ENCODE measurements at regions of chr4 and their contacts with region 1.

Region 1: DNA sequence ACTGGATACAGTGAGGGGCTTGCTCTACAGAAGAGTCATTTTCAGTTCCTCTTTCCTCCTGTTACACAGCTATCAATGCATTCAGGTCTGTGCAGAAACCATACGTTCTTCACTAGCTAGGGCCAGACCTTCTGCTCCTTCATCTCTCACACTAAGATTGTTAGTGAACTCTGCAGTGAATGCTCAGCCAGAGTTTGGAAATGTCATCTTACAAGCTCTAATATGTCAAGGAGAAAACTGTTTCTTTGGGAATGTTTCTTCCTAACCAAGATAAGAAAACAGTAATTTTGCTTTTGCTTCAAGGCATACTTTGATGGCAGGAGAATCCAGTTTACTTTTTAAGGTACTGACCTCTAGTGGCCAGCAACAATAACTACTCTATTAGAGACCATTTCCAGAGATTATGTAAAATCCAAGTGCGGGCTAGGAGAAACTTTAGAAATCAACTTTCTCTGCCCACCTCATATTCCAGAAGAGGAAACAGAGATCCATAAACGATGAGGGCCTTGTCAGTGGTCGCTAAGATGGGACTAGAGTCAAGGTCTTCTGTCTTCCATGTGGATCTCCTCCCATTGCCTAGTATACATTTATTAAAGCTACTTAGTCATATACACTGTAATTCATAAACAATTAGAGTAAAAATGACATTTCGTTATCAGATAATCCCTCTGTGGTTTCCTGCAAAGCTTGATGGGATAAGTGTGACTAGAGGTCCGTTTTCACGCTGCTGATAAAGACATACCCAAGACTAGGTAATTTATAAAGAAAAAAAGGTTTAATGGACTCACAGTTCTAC is 12.1 kb upstream of the CC2D2A start:
- DNase-seq: no peak
- H3K4me3 ChIP-seq: no peak overlapping the region
- H3K27ac ChIP-seq: no peak overlapping the region
- H3K4me1 ChIP-seq: peaks cover 1% of the 10 kb centered on the region
- H3K27me3 ChIP-seq: peaks cover 3% of the 10 kb centered on the region
- CTCF ChIP-seq: peak in 2 of 3 experiments; percentile 44 to 67

Region 2: DNA sequence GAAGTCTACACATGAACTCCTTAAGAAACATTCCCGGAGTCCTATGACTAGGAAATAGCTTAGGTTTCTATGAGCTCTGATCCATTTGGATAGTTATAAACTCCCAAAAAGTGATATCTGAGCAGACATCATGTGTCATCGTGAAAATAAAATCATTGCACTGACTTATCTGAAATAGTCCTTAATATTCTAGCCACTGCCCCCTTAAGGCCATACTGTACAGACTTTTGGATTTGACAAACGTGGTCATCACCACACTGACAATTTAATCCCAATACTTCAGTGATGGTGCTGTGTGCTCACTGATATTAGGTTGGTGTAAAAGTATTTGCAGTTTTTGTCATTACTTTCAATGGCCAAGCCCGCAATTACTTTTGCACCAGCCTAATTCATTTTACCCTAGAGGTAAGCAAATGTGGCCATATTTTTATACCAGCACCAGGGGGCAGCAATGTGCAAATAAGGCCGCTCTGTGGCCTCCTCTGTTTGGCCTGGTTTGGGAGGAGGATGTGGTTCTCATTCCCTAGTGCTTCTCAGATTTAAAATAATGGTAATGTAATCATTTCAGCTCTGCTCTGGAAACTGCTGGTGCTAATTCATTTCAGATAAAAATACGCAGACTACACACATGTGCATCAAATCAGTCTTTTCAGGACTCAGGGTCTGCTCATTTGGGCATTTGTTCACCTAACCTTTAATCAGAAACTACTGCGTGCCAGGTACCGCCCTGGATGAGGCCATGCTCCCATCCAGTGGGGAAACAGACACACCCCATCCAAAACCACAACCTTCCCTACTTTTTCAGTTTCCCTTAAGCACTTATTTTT is 226.1 kb before region 1 on chr4:
- dilution Hi-C with region 1: loop called (anchors 25 kb)
- DNase-seq: peak; percentile 15
- H3K4me3 ChIP-seq: no peak overlapping the region
- H3K27ac ChIP-seq: no peak overlapping the region
- H3K4me1 ChIP-seq: peaks cover 24% of the 10 kb centered on the region
- H3K27me3 ChIP-seq: peaks cover 4% of the 10 kb centered on the region
- CTCF ChIP-seq: peak; percentile 60 to 77 (median 74)

Region 3: GRCh38 chr4:15498356-15498755 is 40.8 kb after region 1 on chr4:
- dilution Hi-C with region 1: no loop called
- DNase-seq: no peak
- H3K4me3 ChIP-seq: no peak overlapping the region
- H3K27ac ChIP-seq: no peak overlapping the region
- H3K4me1 ChIP-seq: peaks cover 4% of the 10 kb centered on the region
- H3K27me3 ChIP-seq: no peaks in the 10 kb centered on the region
- CTCF ChIP-seq: no peak